Heart left ventricle (tissue), 16 donors: ENCODE measurements at regions of chr3 and their contacts with region 1.

Region 1: GRCh38 chr3:150798122-150798626 is 35.2 kb upstream of the SIAH2 start:
- DNase-seq: no peak
- ATAC-seq: no peak
- H3K4me3 ChIP-seq: no peak overlapping the region
- H3K27ac ChIP-seq: no peak overlapping the region
- H3K4me1 ChIP-seq: peaks cover 0 to 8% (median 0%) of the 10 kb centered on the region in 12 donors
- H3K27me3 ChIP-seq: peaks cover 0 to 11% (median 0%) of the 10 kb centered on the region in 9 donors
- CTCF ChIP-seq: no peak
- POLR2A ChIP-seq: no peak

Region 2: DNA sequence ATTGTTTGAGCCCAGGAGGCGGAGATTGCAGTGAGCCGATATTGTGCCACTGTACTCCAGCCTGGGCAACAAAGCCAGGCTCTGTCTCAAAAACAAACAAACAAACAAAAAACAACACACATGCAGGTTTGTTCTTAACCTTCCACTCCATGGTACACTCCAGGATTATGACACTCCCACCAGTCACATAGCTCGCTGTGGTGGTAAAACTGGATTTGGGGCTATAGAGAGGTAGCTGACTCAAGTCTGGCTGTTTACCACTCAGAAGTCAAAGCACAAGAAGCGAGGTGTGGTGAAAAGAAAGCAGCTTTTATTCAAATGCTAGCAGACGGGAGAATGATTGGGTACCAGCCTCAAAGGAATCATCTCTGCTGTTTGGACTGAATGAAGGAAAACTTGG is 13.8 kb after region 1 on chr3:
- intact Hi-C with region 1: loop called in 1 of 10 experiments (anchors 1 kb)
- DNase-seq: no peak
- ATAC-seq: no peak
- H3K4me3 ChIP-seq: no peak overlapping the region
- H3K27ac ChIP-seq: no peak overlapping the region
- H3K4me1 ChIP-seq: no peaks in the 10 kb centered on the region
- H3K27me3 ChIP-seq: peaks cover 0 to 4% (median 0%) of the 10 kb centered on the region in 9 donors
- CTCF ChIP-seq: no peak
- POLR2A ChIP-seq: no peak

Region 3: DNA sequence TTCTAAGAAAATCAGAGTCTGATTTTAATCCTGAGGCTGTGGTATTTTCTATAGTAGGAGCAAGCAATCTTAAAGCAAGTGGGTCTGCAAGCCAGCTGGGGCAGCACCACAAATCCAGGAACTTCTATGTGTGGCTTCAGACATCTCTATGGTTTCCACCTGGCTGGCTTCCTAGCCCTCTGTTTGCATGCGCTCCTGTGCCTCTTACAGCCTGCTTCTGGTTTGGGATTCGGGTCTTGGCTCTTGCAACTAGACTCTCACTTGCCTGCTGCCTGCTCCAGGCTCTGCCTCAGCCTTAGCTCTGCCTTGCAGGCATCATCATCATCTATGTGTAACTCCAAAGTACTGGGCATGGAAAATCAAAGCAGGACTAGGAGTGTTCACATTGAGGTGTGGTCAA is 63.7 kb after region 1 on chr3:
- intact Hi-C with region 1: no loop called
- DNase-seq: no peak
- ATAC-seq: no peak
- H3K4me3 ChIP-seq: no peak overlapping the region
- H3K27ac ChIP-seq: no peak overlapping the region
- H3K4me1 ChIP-seq: peaks cover 0 to 2% (median 0%) of the 10 kb centered on the region in 12 donors
- H3K27me3 ChIP-seq: no peaks in the 10 kb centered on the region
- CTCF ChIP-seq: no peak
- POLR2A ChIP-seq: no peak

Region 4: GRCh38 chr3:150890298-150891230 is 92.4 kb after region 1 on chr3:
- intact Hi-C with region 1: no loop called
- DNase-seq: no peak
- ATAC-seq: no peak
- H3K4me3 ChIP-seq: no peak overlapping the region
- H3K27ac ChIP-seq: no peak overlapping the region
- H3K4me1 ChIP-seq: peaks cover 0 to 6% (median 0%) of the 10 kb centered on the region in 12 donors
- H3K27me3 ChIP-seq: no peaks in the 10 kb centered on the region
- CTCF ChIP-seq: no peak
- POLR2A ChIP-seq: no peak

Region 5: DNA sequence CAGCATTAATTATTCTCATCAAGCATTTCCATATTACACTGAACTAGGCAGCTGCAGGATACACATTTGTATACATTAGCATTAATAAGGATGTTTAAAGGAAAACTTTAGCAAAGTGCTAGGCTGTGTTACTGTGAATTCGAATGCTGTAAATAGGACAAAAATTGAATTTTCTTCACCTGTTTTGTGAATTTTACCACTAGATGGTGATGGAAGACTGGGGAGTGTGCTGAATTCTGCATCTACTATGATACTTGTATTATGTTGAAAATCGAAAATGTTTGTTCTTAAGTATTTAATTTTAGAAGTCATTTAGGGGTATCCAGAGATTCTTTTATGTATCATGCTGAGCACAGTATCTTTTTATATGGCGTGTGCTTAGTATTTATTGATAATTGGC is 492.5 kb after region 1 on chr3:
- intact Hi-C with region 1: loop called in 1 of 10 experiments (anchors 10 kb)
- DNase-seq: no peak
- ATAC-seq: no peak
- H3K4me3 ChIP-seq: no peak overlapping the region
- H3K27ac ChIP-seq: no peak overlapping the region
- H3K4me1 ChIP-seq: no peaks in the 10 kb centered on the region
- H3K27me3 ChIP-seq: no peaks in the 10 kb centered on the region
- CTCF ChIP-seq: peak in 9 of 12 donors; percentile 23 to 51 (median 36)
- POLR2A ChIP-seq: no peak